ENCODE measurements at regions of chr18 and their contacts with region 1.

Region 1: DNA sequence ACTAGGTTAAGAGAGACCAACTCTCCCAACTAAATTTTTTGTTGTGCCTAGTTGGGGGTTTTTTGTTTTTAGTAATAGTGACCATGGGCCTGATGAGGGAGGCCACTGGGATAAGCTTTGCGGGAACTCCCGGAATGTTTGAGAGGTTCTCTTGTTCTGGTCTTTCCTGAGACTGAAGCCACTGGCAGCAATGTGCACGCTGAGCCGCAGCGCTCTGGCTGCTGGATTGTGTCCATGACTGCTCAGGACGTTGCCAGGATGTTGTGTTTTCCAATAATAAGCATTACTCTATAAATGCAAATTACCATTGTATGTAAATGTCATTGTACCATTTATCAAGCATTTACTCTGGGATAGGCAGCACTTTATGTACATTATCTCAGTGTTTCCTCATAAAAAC is 126.1 kb downstream of the GALNT1 start:
- DNase-seq: peak; percentile 23
- H3K4me3 ChIP-seq: no peak overlapping the region
- CTCF ChIP-seq: no peak

Region 2: DNA sequence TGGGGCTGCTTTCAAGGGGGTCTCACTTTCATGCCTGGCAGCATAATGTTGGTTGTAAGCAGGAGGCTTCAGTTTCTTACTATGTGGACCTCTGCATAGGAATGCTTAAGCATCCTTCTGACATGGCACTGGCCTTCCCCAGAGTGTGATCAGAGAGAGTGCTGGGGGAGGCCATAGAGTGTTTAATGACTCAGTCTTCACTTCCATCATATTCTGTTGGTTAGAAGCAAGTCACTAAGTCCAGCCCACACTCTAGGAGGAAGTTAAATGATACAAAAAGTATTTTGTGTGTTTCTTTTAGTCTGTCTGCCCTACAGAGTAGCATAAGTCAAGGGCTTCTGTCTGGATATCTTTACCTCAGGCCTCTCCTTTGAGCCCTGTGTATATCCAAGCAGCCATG is 61.2 kb before region 1 on chr18:
- in situ Hi-C with region 1: no loop called
- DNase-seq: no peak
- H3K4me3 ChIP-seq: no peak overlapping the region
- CTCF ChIP-seq: no peak

Region 3: GRCh38 chr18:35661483-35662146 is 46.1 kb before region 1 on chr18:
- in situ Hi-C with region 1: loop called (anchors 5 kb)
- DNase-seq: no peak
- H3K4me3 ChIP-seq: no peak overlapping the region
- CTCF ChIP-seq: peak; percentile 26

Region 4: GRCh38 chr18:36025025-36025424 is 317.4 kb after region 1 on chr18:
- in situ Hi-C with region 1: no loop called
- DNase-seq: no peak
- H3K4me3 ChIP-seq: no peak overlapping the region
- CTCF ChIP-seq: no peak